ENCODE measurements at regions of chr11 and their contacts with region 1.

Region 1: DNA sequence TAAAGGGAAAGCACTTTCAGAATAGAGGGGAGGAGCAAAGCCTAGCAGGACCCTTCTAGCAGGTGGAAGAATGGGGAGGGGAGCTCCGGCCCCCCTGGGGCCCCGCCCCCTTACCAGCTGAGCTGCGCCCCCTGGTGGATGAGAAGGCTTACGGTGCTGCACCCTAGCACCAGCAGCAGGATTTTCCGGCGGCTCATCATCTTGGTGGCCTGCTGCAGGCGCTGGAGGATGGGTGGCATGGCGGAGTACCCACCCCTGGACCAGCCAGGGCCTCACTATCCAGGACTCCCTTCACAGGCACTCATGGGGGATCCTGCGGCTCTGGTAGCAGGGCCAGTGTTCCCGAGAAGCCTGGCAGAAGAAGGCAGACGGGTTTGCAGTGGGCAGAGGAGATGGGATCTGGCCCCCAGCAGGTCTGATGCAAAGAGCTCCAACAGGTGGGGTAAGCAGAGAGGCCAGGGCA is 3.8 kb downstream of the GAL3ST3 start:
- DNase-seq: peak; percentile 63
- ATAC-seq: peak; percentile 95
- H3K4me3 ChIP-seq: 0 out of 4 replicates have a peak overlapping the region, but pooled peaks of 1 of the 2 experiments have one; percentile 2
- H3K27ac ChIP-seq: no peak overlapping the region
- H3K4me1 ChIP-seq: peaks cover 6 to 9% of the 10 kb centered on the region in 2 experiments; a peak in 3 of 4 replicates
- H3K27me3 ChIP-seq: no peaks in the 10 kb centered on the region
- CTCF ChIP-seq: peak; percentile 86 to 97 (median 88)
- POLR2A ChIP-seq: no peak
- RAD21 ChIP-seq: no peak

Region 2: DNA sequence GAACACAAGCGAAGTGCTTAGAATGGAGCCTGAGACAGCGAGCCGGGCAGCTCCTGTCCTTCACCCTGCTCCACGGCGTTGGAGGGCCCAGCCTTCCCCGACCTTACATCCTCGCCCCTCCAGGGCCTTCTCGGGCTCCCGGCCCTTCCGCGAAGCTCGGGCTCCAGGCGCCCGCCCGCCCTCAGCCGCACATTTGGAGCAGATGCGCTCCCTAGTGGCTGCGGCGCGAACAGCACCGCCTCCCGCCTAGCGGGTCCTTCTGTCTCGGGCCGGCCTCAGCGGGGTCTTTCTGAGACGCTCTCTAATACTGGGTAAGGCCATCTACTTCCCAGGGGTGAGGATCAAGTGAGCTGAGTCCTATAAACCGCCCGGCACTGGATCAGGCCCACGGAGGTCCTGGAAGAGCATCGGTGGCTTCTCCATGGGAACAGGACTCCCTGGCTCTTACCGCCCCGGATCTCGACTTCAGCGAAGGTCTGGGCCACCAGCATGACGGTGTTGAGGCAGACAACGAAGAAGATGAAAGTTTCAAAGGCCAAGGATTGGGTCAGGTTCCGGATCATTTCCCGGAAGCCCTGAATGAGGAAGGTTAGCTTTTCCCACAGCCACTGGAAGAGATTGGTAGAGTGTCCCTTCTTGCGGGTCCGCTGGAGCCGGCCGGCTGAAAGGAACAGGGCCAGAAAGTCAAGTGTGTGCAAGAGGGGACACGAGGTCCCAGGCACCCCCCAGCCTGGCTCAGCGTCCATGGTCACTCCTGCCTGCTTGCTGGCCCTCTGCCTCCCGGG is 22.6 kb before region 1 on chr11:
- CTCF ChIA-PET with region 1: interaction called, 14 read pairs
- POLR2A ChIA-PET with region 1: interaction called, 4 read pairs
- RAD21 ChIA-PET with region 1: no interaction called
- intact Hi-C with region 1: no loop called
- DNase-seq: no peak
- ATAC-seq: peak; percentile 81
- H3K4me3 ChIP-seq: 0 out of 4 replicates have a peak overlapping the region, but pooled peaks of 1 of the 2 experiments have one; percentile 13
- H3K27ac ChIP-seq: no peak overlapping the region; the same call in 1 of the 2 replicates
- H3K4me1 ChIP-seq: peaks cover 14 to 47% of the 10 kb centered on the region in 2 experiments
- H3K27me3 ChIP-seq: no peaks in the 10 kb centered on the region
- CTCF ChIP-seq: peak in 2 of 3 experiments; percentile 90 to 91; a peak in 4 of 6 replicates
- POLR2A ChIP-seq: no peak
- RAD21 ChIP-seq: no peak

Region 3: DNA sequence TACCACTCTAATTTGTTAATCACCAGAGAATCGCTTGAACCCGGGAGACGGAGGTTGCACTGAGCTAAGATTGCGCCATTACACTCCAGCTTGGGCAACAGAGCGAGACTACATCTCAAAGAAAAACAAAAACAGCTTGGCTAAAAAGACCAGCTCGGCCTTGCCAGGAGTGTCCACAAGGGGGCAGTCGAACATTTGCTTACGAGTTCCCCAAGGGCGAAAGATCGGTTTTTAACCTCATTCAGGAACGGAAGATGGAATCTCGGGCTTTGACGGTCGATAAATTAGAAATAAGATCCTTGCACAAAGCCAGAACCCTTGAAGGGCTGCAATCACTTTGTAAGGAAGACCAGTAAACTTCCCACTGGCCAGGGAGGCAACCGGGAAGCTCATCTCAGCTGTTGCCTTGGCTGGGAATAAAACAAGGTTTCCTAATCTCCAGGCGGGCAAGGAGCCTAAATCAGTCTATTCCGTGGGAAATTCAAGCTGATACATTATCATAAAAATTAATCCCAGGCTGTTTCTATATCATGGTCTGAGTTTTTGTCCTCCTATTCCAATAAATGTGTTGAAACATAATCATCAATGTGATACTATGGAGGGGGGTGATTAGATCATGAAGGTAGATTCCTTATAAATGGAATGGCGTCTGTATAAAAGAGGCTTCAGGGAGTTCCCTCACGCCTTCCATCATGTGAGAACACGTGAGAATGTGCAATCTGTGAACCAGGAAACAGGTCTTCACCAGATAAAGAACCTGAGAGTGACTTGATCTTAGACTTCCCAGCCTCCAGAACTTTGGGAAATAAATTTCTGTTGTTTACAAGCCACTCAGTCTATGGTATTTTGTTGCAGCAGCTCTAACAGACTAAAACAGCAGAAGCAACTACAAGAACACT is 341.2 kb after region 1 on chr11:
- CTCF ChIA-PET with region 1: no interaction called
- POLR2A ChIA-PET with region 1: no interaction called
- RAD21 ChIA-PET with region 1: no interaction called
- intact Hi-C with region 1: no loop called
- DNase-seq: peak; percentile 84
- ATAC-seq: peak; percentile 71
- H3K4me3 ChIP-seq: peak overlapping the region; percentile 27 to 32
- H3K27ac ChIP-seq: 0 out of 2 replicates have a peak overlapping the region, but pooled peaks have one; percentile 3
- H3K4me1 ChIP-seq: peaks cover 16 to 32% of the 10 kb centered on the region in 2 experiments; a peak in 3 of 4 replicates
- H3K27me3 ChIP-seq: no peaks in the 10 kb centered on the region
- CTCF ChIP-seq: peak; percentile 79 to 96 (median 94)
- POLR2A ChIP-seq: no peak
- RAD21 ChIP-seq: peak; percentile 71